HCT116 (cell line): ENCODE measurements at regions of chr5 and their contacts with region 1.

Region 1: GRCh38 chr5:1930880-1931603 is 48.3 kb upstream of the IRX4 start:
- DNase-seq: no peak
- ATAC-seq: no peak
- H3K4me3 ChIP-seq: no peak overlapping the region
- H3K27ac ChIP-seq: no peak overlapping the region
- H3K4me1 ChIP-seq: peaks cover 26 to 37% of the 10 kb centered on the region in 2 experiments
- H3K27me3 ChIP-seq: no peaks in the 10 kb centered on the region
- CTCF ChIP-seq: no peak
- POLR2A ChIP-seq: no peak
- RAD21 ChIP-seq: no peak

Region 2: DNA sequence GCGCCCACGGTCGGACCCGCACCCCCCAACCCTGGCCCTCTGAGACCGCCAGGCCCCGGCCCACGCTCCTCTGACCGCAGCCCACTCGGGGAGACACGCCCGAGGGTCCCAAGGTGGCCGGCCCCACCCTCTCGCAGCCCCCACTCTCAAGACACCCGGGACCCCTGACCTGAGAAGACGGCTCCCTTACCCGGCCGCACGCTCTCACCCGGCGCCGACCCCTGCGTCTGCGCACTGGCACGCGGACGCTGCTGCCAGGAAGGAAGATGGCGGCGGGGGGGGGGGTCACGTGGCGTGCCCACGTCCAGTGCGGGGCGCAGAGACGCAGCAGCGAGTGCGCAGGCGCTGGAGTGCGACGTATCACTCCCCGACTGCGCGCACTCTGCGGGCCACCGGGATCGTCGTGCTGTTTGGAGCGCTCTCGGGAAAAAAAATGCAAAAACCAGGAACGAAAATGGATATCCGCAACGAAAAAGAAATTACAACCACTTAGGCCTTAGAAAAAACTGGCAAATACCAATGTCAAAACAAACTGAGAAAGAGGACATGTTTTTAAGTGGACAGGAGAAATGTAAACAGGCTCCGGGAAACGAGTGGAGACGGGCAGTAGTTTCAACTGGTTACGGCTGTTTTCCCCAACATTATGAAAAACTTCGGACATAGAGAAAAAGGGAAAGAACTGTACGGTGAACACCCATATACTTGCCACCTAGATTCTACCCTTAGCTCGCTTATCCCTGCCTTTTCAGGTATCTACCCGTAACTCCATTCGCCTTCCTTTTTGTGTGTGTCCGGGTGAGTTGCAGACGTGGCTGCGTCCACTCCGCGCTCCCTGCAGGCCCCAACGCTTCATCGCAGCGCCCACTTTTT is 131.2 kb before region 1 on chr5 and contains the start of gene MRPL36:
- CTCF ChIA-PET with region 1: no interaction called
- POLR2A ChIA-PET with region 1: no interaction called
- RAD21 ChIA-PET with region 1: no interaction called
- intact Hi-C with region 1: loop called (anchors 10 kb)
- DNase-seq: peak; percentile 73
- ATAC-seq: peak; percentile 83
- H3K4me3 ChIP-seq: peak within 1 kb of the TSS; percentile 78 to 93
- H3K27ac ChIP-seq: peak within 1 kb of the TSS; percentile 96
- H3K4me1 ChIP-seq: peaks cover 2 to 23% of the 10 kb centered on the region in 2 experiments; a peak in 3 of 4 replicates
- H3K27me3 ChIP-seq: no peaks in the 10 kb centered on the region
- CTCF ChIP-seq: no peak
- POLR2A ChIP-seq: peak; percentile 79
- RAD21 ChIP-seq: no peak
- total RNA-seq, gene MRPL36: 71.9 TPM

Region 3: GRCh38 chr5:2948875-2949274 is 1017.8 kb after region 1 on chr5:
- CTCF ChIA-PET with region 1: no interaction called
- POLR2A ChIA-PET with region 1: no interaction called
- RAD21 ChIA-PET with region 1: no interaction called
- intact Hi-C with region 1: no loop called
- DNase-seq: no peak
- ATAC-seq: no peak
- H3K4me3 ChIP-seq: no peak overlapping the region
- H3K27ac ChIP-seq: no peak overlapping the region
- H3K4me1 ChIP-seq: no peaks in the 10 kb centered on the region
- H3K27me3 ChIP-seq: no peaks in the 10 kb centered on the region
- CTCF ChIP-seq: no peak
- POLR2A ChIP-seq: no peak
- RAD21 ChIP-seq: no peak